Right cardiac atrium (tissue), 5 donors: ENCODE measurements at regions of chr11 and their contacts with region 1.

Region 1: GRCh38 chr11:67345920-67346799 is 7.2 kb downstream of the POLD4 start:
- DNase-seq: no peak
- ATAC-seq: peak; percentile 4 to 6
- H3K4me3 ChIP-seq: no peak overlapping the region
- H3K27ac ChIP-seq: no peak overlapping the region
- H3K4me1 ChIP-seq: peaks cover 4% of the 10 kb centered on the region
- H3K27me3 ChIP-seq: no peaks in the 10 kb centered on the region

Region 2: GRCh38 chr11:67382276-67383136 is 36.3 kb after region 1 on chr11:
- intact Hi-C with region 1: loop called in 2 of 4 experiments (anchors 2 to 5 kb)
- DNase-seq: peak; percentile 81 to 92 (median 90)
- ATAC-seq: peak; percentile 78 to 85
- H3K4me3 ChIP-seq: no peak overlapping the region
- H3K27ac ChIP-seq: no peak overlapping the region
- H3K4me1 ChIP-seq: no peaks in the 10 kb centered on the region
- H3K27me3 ChIP-seq: no peaks in the 10 kb centered on the region